Caco-2 (cell line): ENCODE measurements at regions of chr15 and their contacts with region 1.

Region 1: DNA sequence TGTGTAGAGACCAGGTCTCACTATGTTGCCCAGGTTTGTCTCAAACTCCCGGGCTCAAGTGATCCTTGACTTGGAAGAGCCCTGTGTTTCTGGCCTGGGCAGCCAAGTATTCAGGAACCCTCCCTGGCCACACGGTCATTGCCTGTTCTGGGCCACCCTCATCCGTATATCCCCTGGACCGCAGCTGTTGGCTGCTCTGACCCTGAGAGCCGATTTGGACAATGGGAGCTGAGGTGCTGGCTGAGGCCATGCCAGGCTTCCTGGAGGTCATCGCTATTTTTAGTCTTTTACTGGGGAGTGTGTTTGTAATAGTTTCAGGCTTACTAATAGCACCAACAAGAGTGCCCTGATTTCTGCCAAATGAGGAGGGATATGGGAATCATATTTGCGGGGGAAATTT is 60.7 kb downstream of the ADAMTS7 start:
- DNase-seq: peak in 1 of 2 experiments; percentile 15
- H3K4me3 ChIP-seq: no peak overlapping the region
- H3K4me3 Mint-ChIP-seq: no peak overlapping the region
- H3K27ac Mint-ChIP-seq: no peak overlapping the region
- H3K4me1 ChIP-seq: 0 out of 2 replicates have a peak, but pooled peaks cover 3% of the 10 kb centered on the region
- H3K4me1 Mint-ChIP-seq: no peaks in the 10 kb centered on the region
- H3K27me3 ChIP-seq: no peaks in the 10 kb centered on the region
- H3K27me3 Mint-ChIP-seq: no peaks in the 10 kb centered on the region
- CTCF ChIP-seq: no peak

Region 2: DNA sequence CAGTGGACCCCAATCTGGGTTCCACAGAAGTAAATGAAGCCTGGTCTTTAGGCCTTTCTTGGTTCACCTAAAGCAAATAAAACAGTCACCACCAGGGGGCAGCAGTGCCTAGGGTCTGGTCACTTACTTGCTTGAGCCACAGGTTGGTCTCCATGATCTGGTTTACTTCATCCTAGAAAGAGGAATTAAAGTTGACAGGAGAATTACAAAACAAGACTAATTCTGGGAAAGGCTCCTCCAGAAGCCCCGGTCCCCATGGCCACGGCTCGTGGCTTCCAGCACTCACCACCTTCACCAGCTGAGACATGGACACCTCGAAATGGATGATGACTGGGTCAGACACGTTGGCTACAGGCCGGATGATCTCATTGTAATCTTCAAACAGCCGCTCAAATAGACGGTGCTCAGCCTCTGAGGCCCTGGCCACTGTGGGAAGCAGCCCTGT is 132.1 kb before region 1 on chr15:
- CTCF ChIA-PET with region 1: no interaction called
- POLR2A ChIA-PET with region 1: no interaction called
- intact Hi-C with region 1: no loop called
- DNase-seq: peak; percentile 80 to 87
- H3K4me3 ChIP-seq: no peak overlapping the region
- H3K4me3 Mint-ChIP-seq: no peak overlapping the region
- H3K27ac Mint-ChIP-seq: no peak overlapping the region
- H3K4me1 ChIP-seq: no peaks in the 10 kb centered on the region
- H3K4me1 Mint-ChIP-seq: no peaks in the 10 kb centered on the region
- H3K27me3 ChIP-seq: no peaks in the 10 kb centered on the region
- H3K27me3 Mint-ChIP-seq: peaks cover 4% of the 10 kb centered on the region
- CTCF ChIP-seq: peak; percentile 66 to 79

Region 3: GRCh38 chr15:78811124-78811824 is 60.7 kb after region 1 on chr15 and contains the start of gene ADAMTS7:
- CTCF ChIA-PET with region 1: no interaction called
- POLR2A ChIA-PET with region 1: no interaction called
- intact Hi-C with region 1: loop called (anchors 10 kb)
- DNase-seq: peak; percentile 66 to 76
- H3K4me3 ChIP-seq: peak within 1 kb of the TSS; percentile 54
- H3K4me3 Mint-ChIP-seq: peak within 1 kb of the TSS; percentile 75
- H3K27ac Mint-ChIP-seq: peak within 1 kb of the TSS; percentile 43
- H3K4me1 ChIP-seq: peaks cover 8% of the 10 kb centered on the region
- H3K4me1 Mint-ChIP-seq: peaks cover 10% of the 10 kb centered on the region
- H3K27me3 ChIP-seq: no peaks in the 10 kb centered on the region
- H3K27me3 Mint-ChIP-seq: peaks cover 9% of the 10 kb centered on the region
- CTCF ChIP-seq: peak; percentile 45 to 79
- total RNA-seq, gene ADAMTS7: 1.1 and 2.0 TPM in 2 replicates